Activated CD8-positive, alpha-beta T cell treated with anti-CD3 and anti-CD28 coated beads for 36 hours (primary cell): ENCODE measurements at regions of chr22 and their contacts with region 1.

Region 1: GRCh38 chr22:30905696-30906341 is 62.8 kb downstream of the MORC2 start:
- DNase-seq: no peak
- ATAC-seq: no peak
- H3K4me3 Mint-ChIP-seq: no peak overlapping the region
- H3K27ac Mint-ChIP-seq: no peak overlapping the region
- H3K4me1 Mint-ChIP-seq: peaks cover 4% of the 10 kb centered on the region
- H3K27me3 Mint-ChIP-seq: no peaks in the 10 kb centered on the region
- CTCF ChIP-seq: no peak

Region 2: GRCh38 chr22:30763815-30764686 is 141.8 kb before region 1 on chr22:
- CTCF ChIA-PET with region 1: interaction called, 13 read pairs
- POLR2A ChIA-PET with region 1: no interaction called
- intact Hi-C with region 1: no loop called
- DNase-seq: peak; percentile 75
- ATAC-seq: peak; percentile 97
- H3K4me3 Mint-ChIP-seq: no peak overlapping the region
- H3K27ac Mint-ChIP-seq: no peak overlapping the region
- H3K4me1 Mint-ChIP-seq: peaks cover 2% of the 10 kb centered on the region
- H3K27me3 Mint-ChIP-seq: no peaks in the 10 kb centered on the region
- CTCF ChIP-seq: peak; percentile 83